Activated CD8-positive, alpha-beta T cell treated with anti-CD3 and anti-CD28 coated beads, Interleukin-2, amount 10 ng/mL, durations not matched to agents 7 days and 5 days (primary cell): ENCODE measurements at regions of chr14 and their contacts with region 1.

Region 1: DNA sequence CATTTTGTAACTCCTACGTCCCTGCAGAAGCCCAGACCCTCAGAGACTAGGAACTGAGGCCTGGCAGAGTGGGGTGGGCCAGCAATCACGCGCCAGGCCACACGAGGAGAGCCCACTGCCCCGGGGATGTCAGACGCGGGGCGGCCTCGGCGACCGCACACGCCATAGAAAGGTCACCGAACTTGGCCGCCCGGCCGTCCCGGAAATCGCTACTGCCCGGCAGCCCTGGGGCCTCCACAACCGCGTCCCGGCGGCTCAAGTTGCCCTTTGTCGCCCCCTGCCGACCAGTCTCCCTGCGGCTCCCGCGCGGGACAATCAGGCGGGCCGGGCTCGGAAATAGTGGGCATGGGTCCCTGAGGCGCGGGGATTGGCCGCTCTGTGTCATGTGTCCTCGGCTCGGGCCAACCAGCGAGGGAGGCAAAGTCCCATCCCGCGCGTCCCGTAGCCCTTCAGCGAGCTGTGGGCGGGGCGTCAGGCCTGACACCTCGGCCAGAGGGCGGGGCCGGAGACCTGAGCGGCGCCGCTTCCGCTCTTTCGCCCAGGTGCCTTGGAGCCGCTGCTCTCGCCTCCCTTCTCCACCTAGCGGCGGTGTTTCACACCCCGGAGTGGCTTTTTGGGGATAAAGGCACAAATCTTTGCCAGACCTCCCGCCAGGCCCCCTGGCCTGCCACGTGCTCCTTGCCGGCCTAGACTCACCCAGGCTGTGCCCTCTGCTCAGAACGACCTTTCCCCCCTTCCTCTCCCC is 33.4 kb upstream of the DEGS2 start:
- DNase-seq: peak; percentile 100
- ATAC-seq: peak; percentile 100
- H3K4me3 Mint-ChIP-seq: peak overlapping the region; percentile 52
- H3K27ac Mint-ChIP-seq: peak overlapping the region; percentile 89
- H3K4me1 Mint-ChIP-seq: peaks cover 20% of the 10 kb centered on the region
- H3K27me3 Mint-ChIP-seq: no peaks in the 10 kb centered on the region

Region 2: GRCh38 chr14:100037353-100037752 is 155.5 kb before region 1 on chr14:
- CTCF ChIA-PET with region 1: interaction called, 12 read pairs
- POLR2A ChIA-PET with region 1: no interaction called
- DNase-seq: no peak
- ATAC-seq: no peak
- H3K4me3 Mint-ChIP-seq: no peak overlapping the region
- H3K27ac Mint-ChIP-seq: no peak overlapping the region
- H3K4me1 Mint-ChIP-seq: peaks cover 10% of the 10 kb centered on the region
- H3K27me3 Mint-ChIP-seq: no peaks in the 10 kb centered on the region

Region 3: GRCh38 chr14:100078991-100079725 is 113.7 kb before region 1 on chr14:
- CTCF ChIA-PET with region 1: interaction called, 47 read pairs
- POLR2A ChIA-PET with region 1: no interaction called
- DNase-seq: peak; percentile 94
- ATAC-seq: peak; percentile 83
- H3K4me3 Mint-ChIP-seq: peak overlapping the region; percentile 91
- H3K27ac Mint-ChIP-seq: peak overlapping the region; percentile 93
- H3K4me1 Mint-ChIP-seq: peaks cover 97% of the 10 kb centered on the region
- H3K27me3 Mint-ChIP-seq: no peaks in the 10 kb centered on the region

Region 4: DNA sequence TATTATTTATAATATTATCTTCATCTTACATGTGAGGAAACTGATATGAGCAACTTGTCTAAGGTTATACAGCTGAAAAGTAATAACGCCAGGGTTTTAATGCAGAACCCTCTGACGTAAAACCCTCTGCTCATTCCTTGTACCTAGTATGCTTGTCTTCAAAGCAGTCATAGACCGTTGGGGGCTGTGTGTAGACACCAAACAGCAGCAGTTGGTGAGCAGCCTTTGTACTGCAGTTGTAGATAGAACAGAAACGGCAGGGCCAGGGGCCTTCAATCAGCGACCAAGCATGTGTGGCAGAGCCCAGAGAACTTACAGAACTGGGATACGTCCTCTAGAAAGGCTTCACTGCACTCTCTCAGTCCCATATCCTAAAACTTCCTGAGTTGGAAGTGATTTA is 99.5 kb before region 1 on chr14:
- CTCF ChIA-PET with region 1: no interaction called
- POLR2A ChIA-PET with region 1: no interaction called
- DNase-seq: no peak
- ATAC-seq: peak; percentile 52
- H3K4me3 Mint-ChIP-seq: no peak overlapping the region
- H3K27ac Mint-ChIP-seq: peak overlapping the region; percentile 45
- H3K4me1 Mint-ChIP-seq: peaks cover 91% of the 10 kb centered on the region
- H3K27me3 Mint-ChIP-seq: no peaks in the 10 kb centered on the region

Region 5: GRCh38 chr14:100155042-100155846 is 37.6 kb before region 1 on chr14:
- CTCF ChIA-PET with region 1: interaction called, 22 read pairs
- POLR2A ChIA-PET with region 1: no interaction called
- DNase-seq: peak; percentile 45
- ATAC-seq: no peak
- H3K4me3 Mint-ChIP-seq: no peak overlapping the region
- H3K27ac Mint-ChIP-seq: no peak overlapping the region
- H3K4me1 Mint-ChIP-seq: peaks cover 3% of the 10 kb centered on the region
- H3K27me3 Mint-ChIP-seq: peaks cover 28% of the 10 kb centered on the region

Region 6: GRCh38 chr14:100213956-100214774 is 21.3 kb after region 1 on chr14:
- CTCF ChIA-PET with region 1: interaction called, 36 read pairs
- POLR2A ChIA-PET with region 1: interaction called, 9 read pairs
- DNase-seq: peak; percentile 93
- ATAC-seq: peak; percentile 95
- H3K4me3 Mint-ChIP-seq: peak overlapping the region; percentile 80
- H3K27ac Mint-ChIP-seq: peak overlapping the region; percentile 91
- H3K4me1 Mint-ChIP-seq: peaks cover 43% of the 10 kb centered on the region
- H3K27me3 Mint-ChIP-seq: no peaks in the 10 kb centered on the region

Region 7: DNA sequence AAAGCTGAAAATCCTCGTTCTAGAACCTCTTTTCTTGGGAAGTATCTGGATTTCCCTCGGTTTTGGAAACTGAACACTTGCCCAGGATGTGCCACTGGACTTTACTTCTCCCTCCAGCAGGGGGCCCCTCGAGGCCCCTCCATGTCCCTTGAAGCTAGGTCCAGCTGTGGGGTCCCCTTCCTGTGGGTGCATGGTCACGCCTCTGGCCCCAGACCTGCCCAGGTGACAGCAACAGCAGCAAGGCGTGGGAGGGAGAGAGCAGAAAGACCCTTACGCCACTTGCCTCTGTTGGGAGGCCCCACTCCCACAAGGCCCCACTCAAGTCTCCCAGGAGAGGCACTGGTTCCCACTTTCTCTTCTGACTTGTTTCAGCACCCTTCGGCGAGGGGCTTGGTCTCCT is 110.3 kb after region 1 on chr14:
- CTCF ChIA-PET with region 1: no interaction called
- POLR2A ChIA-PET with region 1: no interaction called
- DNase-seq: no peak
- ATAC-seq: no peak
- H3K4me3 Mint-ChIP-seq: no peak overlapping the region
- H3K27ac Mint-ChIP-seq: no peak overlapping the region
- H3K4me1 Mint-ChIP-seq: peaks cover 31% of the 10 kb centered on the region
- H3K27me3 Mint-ChIP-seq: peaks cover 16% of the 10 kb centered on the region

Region 8: DNA sequence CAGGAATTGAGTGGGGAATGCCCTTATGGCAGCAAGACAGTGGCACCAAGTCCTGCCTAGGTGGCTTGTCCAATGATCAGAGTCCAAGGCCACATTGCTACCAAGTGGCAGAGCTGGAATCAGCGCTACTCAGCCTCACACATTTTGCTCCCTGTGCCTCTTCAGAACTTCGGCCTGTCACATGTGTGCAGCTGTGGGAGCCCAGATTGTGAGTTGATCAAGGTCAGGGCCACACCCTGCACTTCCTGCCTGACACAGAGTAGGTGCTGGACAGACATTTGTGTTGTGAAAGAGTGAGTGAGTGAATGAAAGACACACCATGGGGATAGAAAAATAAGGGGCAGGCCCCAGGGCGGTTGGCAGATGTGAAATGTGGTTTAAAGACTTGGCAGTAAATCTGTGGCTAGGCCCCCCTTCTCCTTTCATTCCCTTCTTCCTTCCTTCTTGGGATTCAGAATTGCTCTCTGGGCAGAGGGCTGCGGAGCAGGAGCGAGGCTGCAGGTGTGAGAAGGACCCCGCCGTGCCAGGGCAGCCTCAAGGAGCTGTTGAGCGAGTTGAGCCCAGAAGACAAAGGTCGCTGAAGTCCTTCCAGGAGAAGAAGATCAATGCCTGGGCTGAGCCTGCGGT is 213.8 kb after region 1 on chr14:
- CTCF ChIA-PET with region 1: no interaction called
- POLR2A ChIA-PET with region 1: no interaction called
- DNase-seq: peak; percentile 54
- ATAC-seq: peak; percentile 79
- H3K4me3 Mint-ChIP-seq: no peak overlapping the region
- H3K27ac Mint-ChIP-seq: peak overlapping the region; percentile 88
- H3K4me1 Mint-ChIP-seq: peaks cover 34% of the 10 kb centered on the region
- H3K27me3 Mint-ChIP-seq: no peaks in the 10 kb centered on the region

Region 9: DNA sequence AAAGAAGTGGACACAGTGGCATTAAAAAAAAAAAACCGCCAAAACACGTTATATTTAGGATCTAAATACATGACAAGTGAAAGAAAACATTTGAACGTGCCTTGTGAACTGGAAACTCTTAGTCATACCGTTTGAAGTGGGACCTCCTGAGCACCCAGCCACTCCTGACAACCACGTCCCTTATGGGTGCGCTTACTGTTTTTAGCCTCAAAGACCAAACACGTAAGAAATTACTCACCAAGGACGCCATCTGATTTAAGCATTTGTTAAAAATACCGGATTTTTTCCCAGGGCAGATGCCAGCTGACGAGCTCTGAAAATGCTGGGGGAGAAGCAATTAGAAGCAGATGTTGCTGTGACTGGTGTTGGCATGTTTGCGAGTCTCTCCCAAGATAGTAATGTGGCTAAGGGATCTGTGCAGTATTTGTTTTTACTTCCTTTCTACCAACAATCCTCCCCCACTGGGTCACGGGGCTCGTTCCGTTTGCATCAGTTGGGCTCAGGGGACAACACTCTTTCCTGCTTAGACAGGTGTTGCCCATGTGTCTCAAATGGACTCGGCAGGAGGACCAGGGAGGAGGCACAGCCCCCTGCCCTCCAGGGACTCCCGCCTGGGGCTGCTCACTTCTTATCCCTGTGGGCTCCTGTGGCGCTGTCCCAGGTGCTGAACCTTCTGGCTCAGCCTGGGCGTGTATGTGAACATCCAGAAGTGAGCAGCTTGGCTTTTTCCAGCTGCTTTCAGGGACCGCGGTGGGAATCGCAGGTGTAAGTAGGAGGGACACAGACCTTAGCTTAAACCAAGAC is 293.4 kb after region 1 on chr14:
- CTCF ChIA-PET with region 1: no interaction called
- POLR2A ChIA-PET with region 1: no interaction called
- DNase-seq: peak; percentile 85
- ATAC-seq: peak; percentile 87
- H3K4me3 Mint-ChIP-seq: peak overlapping the region; percentile 26
- H3K27ac Mint-ChIP-seq: peak overlapping the region; percentile 35
- H3K4me1 Mint-ChIP-seq: peaks cover 36% of the 10 kb centered on the region
- H3K27me3 Mint-ChIP-seq: no peaks in the 10 kb centered on the region